ENCODE measurements at regions of chr12 and their contacts with region 1.

Region 1: DNA sequence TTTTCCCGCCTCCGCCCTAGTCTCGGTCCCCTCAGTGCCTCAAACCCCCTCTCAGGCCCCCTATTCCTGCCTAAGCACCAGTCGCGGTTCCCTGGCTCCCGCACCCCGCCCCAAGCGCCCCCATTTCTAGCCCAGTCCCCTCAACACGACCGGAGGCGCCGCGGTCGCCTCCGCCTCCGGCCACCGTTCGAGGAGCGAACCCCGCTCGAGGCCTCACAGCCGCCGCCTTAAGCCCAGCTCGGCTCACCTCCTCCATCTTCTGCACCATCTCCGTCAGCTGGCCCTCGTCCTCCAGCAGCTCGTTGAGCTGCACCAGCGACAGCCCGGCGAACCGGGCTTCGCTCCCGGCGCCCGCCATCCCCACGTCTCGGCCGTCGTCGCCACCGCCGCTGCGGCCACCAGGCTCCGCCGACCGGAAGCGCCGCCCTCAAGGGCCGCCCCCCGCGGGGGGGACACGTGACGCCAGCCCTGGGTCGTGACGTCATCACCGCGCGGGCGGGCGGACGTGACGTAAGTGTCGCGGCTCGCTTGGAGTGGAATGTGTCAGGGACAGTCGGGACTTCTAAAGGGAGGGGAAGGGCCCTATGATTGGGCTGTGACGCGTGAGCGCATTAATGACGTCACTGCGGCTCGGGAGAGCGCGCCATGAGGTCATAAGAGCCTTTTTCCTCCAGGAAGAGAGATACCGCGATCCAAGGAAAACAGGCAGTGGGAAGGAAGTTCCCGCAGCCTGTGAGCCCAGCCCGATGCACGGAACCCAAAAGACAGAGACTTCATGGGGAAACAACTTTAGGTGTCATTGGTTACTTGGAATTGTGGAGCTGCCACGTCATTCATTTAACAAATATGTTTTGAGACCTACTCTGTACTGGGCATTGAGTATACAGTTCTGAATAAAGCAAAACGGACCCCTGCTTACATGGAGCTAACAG is at the start of gene VPS37B:
- DNase-seq: peak; percentile 93
- H3K4me3 Mint-ChIP-seq: peak within 1 kb of the TSS; percentile 100
- H3K27ac Mint-ChIP-seq: peak within 1 kb of the TSS; percentile 98
- H3K4me1 Mint-ChIP-seq: peaks cover 48% of the 10 kb centered on the region
- H3K27me3 Mint-ChIP-seq: no peaks in the 10 kb centered on the region
- CTCF ChIP-seq: no peak
- total RNA-seq, gene VPS37B: 104 and 118 TPM in 2 replicates

Region 2: GRCh38 chr12:122946690-122947341 is 50.8 kb after region 1 on chr12:
- CTCF ChIA-PET with region 1: interaction called, 17 read pairs
- intact Hi-C with region 1: loop called (anchors 2 kb)
- DNase-seq: peak; percentile 96
- H3K4me3 Mint-ChIP-seq: peak overlapping the region; percentile 47
- H3K27ac Mint-ChIP-seq: peak overlapping the region; percentile 93
- H3K4me1 Mint-ChIP-seq: peaks cover 81% of the 10 kb centered on the region
- H3K27me3 Mint-ChIP-seq: no peaks in the 10 kb centered on the region
- CTCF ChIP-seq: peak; percentile 43